ENCODE measurements at regions of chr18 and their contacts with region 1.

Region 1: GRCh38 chr18:3015203-3015590 is 2.3 kb upstream of the LPIN2 start:
- DNase-seq: no peak
- ATAC-seq: no peak

Region 2: DNA sequence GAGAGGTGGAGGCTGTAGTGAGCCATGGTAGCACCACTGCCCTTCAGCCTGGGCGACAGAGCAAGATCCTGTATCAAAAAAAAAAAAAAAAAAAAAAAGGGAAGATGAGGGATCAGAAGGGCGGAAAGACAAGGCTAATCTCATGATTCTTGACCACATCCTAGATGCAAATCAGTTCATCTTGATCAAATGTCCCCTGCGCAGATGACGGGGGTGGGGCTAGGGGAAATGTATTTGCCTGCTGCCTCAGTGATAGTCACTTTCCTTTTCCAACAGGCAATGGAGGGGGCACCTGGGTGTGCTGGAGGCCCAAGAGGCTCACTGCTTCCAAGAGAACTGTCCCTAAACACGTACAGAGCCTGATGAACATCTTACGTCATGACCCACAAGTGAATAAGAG is 172.1 kb before region 1 on chr18:
- intact Hi-C with region 1: no loop called
- DNase-seq: peak in 1 of 2 donors; percentile 18
- ATAC-seq: no peak

Region 3: GRCh38 chr18:3062798-3063680 is 47.8 kb after region 1 on chr18:
- intact Hi-C with region 1: loop called in 1 of 2 experiments (anchors 5 kb)
- DNase-seq: peak; percentile 58 to 86
- ATAC-seq: peak; percentile 75

Region 4: DNA sequence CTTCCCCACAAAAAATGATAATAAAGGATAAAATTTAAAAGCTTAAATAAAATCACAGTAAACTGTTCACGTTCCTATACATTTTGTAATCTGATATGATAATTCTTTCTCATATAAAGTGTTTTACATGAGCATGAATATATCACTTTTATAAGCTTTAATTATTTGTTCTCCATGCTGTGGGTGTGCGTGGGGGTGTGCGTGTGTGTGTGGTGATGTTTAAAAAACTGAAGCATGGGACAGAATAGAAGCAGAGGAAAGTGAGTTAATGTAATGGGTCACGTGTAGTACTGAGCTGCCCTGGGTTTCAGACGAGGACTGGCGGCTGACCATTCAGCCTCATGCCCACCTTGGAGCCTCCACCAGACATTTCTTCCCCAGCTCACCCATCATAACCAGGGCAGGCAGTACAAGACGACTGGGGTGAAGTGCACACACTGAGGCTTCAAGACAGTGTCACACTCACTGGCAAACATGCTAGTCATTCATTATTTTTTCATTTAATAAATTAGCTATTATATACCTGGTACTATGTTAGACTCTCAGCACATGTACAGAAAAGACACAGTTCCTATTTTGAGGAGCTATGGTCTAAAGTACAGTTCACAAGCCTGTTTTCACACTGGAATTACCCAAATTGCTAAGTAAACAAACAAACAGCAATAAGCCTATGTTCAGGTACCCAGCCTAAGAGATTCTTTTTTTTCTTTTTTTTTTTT is 95.0 kb after region 1 on chr18:
- intact Hi-C with region 1: no loop called
- DNase-seq: no peak
- ATAC-seq: no peak

Measured in left colon (tissue), 2 donors.